H1 (cell line): ENCODE measurements at regions of chr1 and their contacts with region 1.

Region 1: GRCh38 chr1:203673550-203674427 is 47.2 kb downstream of the ATP2B4 start:
- DNase-seq: no peak
- H3K4me3 ChIP-seq: no peak overlapping the region
- H3K27ac ChIP-seq: no peak overlapping the region
- H3K4me1 ChIP-seq: peaks cover 3 to 16% (median 10%) of the 10 kb centered on the region in 4 experiments
- H3K27me3 ChIP-seq: no peaks in the 10 kb centered on the region
- CTCF ChIP-seq: peak in 2 of 3 experiments; percentile 1 to 32; a peak in 1 of 4 replicates
- EP300 ChIP-seq: no peak
- POLR2A ChIP-seq: no peak
- RAD21 ChIP-seq: peak in 1 of 2 experiments; percentile 16; a peak in 1 of 4 replicates

Region 2: DNA sequence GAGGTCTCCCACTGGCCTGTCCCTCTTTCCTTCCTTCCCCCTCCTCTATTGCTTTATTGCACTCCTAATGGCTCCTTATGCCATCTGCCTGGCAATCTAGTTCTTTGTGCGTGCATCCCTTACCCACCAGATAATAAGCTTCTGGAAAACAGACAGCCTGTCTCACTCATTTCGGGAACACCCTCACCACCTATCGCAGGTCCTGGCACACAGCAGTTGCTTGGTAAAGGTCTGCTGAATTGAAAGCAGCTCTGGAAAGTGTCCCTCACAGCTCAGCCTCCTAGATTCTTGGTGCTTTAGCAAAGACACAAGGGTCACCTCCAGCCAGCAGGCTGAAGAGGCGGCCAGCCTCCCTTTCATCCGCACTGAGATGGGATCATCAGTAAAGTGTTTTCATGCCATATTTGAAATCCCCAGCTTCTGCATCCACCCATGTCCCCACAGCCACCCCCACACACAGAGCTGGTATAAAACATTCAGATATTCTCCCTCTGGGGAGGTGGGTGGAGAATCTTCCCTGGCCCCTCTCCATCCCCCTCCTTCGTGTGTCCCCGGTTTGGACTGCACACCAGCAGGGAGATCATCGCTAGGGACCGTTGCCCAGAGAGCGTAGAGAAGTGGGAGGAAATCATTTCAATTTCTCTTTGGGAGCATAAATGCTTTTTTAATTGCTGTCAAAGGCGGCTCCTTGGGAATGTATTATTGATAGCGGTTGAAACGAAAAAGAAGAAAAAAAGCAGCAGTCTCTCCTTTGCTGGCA is 76.3 kb before region 1 on chr1:
- CTCF ChIA-PET with region 1: no interaction called
- POLR2A ChIA-PET with region 1: no interaction called
- DNase-seq: no peak
- H3K4me3 ChIP-seq: no peak overlapping the region
- H3K27ac ChIP-seq: no peak overlapping the region
- H3K4me1 ChIP-seq: peaks cover 7 to 22% (median 10%) of the 10 kb centered on the region in 4 experiments; a peak in 6 of 7 replicates
- H3K27me3 ChIP-seq: no peaks in the 10 kb centered on the region
- CTCF ChIP-seq: no peak
- EP300 ChIP-seq: no peak
- POLR2A ChIP-seq: no peak
- RAD21 ChIP-seq: no peak

Region 3: DNA sequence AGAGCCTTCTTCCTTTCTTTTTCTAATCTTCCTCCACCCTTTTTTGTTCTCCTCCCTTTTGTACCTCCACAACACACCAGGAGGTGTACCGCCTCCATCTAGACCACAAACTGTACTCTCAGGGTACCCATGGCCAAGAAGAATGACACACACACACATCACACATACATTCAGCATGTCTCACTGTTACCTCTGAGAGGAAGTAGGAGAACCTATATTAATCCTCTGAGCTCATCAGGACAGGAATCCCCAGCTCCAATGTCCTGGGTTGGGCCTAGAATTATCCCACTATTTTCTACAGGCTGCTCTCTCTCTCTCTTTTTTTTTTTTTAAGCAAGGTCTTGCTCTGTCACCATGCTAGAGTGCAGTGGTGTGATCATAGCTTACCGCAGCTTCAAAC is 10.5 kb before region 1 on chr1:
- CTCF ChIA-PET with region 1: interaction called, 17 read pairs
- POLR2A ChIA-PET with region 1: interaction called, 3 read pairs
- DNase-seq: no peak
- H3K4me3 ChIP-seq: no peak overlapping the region
- H3K27ac ChIP-seq: no peak overlapping the region
- H3K4me1 ChIP-seq: peaks cover 0 to 2% (median under 1%) of the 10 kb centered on the region in 4 experiments; a peak in 1 of 7 replicates
- H3K27me3 ChIP-seq: no peaks in the 10 kb centered on the region
- CTCF ChIP-seq: no peak
- EP300 ChIP-seq: no peak
- POLR2A ChIP-seq: no peak
- RAD21 ChIP-seq: no peak

Region 4: GRCh38 chr1:203726417-203726867 is 52.7 kb after region 1 on chr1:
- CTCF ChIA-PET with region 1: no interaction called
- POLR2A ChIA-PET with region 1: no interaction called
- DNase-seq: no peak
- H3K4me3 ChIP-seq: no peak overlapping the region
- H3K27ac ChIP-seq: no peak overlapping the region
- H3K4me1 ChIP-seq: no peaks in the 10 kb centered on the region
- H3K27me3 ChIP-seq: no peaks in the 10 kb centered on the region
- CTCF ChIP-seq: no peak
- EP300 ChIP-seq: no peak
- POLR2A ChIP-seq: no peak
- RAD21 ChIP-seq: no peak